ENCODE measurements at regions of chr4 and their contacts with region 1.

Region 1: GRCh38 chr4:2934813-2935761 is 28.1 kb downstream of the NOP14 start:
- DNase-seq: peak; percentile 98
- H3K4me3 ChIP-seq: peak overlapping the region; percentile 71 to 97 (median 88)
- H3K27ac ChIP-seq: peak overlapping the region; percentile 90 to 99 (median 94)
- H3K4me1 ChIP-seq: peaks cover 40 to 78% (median 64%) of the 10 kb centered on the region in 6 donors
- H3K27me3 ChIP-seq: no peaks in the 10 kb centered on the region
- CTCF ChIP-seq: peak in 9 of 11 experiments; percentile 18 to 59 (median 43)
- POLR2A ChIP-seq: peak in 2 of 3 donors; percentile 70 to 80

Region 2: DNA sequence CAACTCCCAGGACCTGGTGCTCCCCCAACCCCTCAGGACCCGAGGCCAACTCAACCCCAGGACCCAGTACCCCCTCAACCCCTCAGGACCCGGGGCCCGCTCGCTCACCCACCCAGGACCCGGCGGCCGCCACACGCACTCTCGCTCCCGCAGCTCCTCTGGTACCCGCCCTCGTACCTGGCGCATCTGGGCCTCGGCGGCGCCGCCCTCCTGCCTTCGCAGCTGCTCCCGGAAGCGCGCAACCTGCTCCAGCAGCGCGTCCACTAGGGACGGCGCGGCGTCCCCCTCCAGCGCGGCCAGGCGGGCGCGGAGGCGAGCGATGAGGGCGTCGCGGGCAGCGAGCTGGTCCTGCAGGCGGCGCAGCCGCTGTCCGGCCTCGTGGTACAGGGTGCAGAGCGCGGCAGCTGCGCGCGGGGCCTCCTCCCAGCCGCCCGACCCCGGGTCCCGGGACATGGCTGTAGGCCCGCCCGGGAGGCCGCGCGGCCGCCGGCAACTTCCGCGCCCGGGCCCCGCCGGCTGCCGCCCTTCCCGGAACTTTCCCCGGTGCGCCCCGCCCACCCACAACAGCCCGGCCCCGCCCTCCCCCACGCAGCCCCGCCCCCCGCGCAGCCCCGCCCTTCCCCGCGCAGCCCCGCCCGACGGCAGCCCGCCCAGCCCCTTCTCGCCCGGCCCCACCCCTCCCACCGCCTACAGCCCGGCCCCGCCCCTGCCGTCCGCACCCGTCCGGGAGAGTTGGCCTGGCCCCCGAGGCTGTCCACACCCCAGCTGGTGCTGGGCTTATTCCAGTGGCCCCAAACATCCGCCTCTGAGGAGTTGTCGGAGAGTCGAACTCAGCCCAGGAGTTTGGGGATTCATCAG is 179.0 kb before region 1 on chr4 and contains the start of gene TNIP2:
- intact Hi-C with region 1: loop called (anchors 10 kb)
- DNase-seq: peak; percentile 96
- H3K4me3 ChIP-seq: peak within 1 kb of the TSS; percentile 73 to 96 (median 86)
- H3K27ac ChIP-seq: peak within 1 kb of the TSS; percentile 91 to 98 (median 94)
- H3K4me1 ChIP-seq: peaks cover 10 to 55% (median 30%) of the 10 kb centered on the region in 6 donors
- H3K27me3 ChIP-seq: no peaks in the 10 kb centered on the region
- CTCF ChIP-seq: peak in 8 of 11 experiments; percentile 32 to 62 (median 42)
- POLR2A ChIP-seq: peak in 2 of 3 donors; percentile 65 to 77
- total RNA-seq, gene TNIP2: 35.1 to 52.5 (median 50.4) TPM

Region 3: DNA sequence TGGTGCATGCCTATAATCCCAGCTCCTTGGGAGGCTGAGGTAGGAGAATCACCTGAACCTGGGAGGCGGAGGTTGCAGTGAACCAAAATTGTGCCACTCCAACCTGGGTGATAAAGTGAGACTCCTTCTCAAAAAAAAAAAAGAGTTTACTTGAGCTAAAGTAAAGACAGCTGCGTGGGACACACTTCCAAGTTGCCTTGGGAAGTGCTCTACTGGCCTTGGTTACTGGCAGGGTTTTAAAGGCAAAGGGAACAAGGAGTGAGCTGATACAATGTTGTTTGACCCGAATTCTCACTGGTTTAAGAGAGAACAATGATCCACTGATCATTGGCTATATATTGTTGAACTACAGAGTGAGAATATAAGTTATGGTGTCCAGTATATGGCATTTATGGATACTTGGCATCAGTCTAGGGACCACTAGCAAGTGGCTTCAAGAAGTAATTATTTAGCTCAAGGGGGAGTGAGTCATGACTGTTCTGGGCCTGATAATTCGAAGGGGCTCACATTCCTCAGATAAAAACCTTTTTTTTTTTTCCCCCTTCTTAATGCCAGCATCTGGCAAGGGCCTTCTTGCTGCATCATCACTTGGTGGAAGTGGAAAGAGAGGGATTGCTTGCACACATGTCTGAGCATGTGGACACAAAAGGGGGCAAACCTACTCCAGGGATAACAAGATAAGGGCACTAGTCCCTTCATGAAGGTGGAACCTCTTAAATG is 60.6 kb after region 1 on chr4:
- intact Hi-C with region 1: no loop called
- DNase-seq: no peak
- H3K4me3 ChIP-seq: no peak overlapping the region
- H3K27ac ChIP-seq: no peak overlapping the region
- H3K4me1 ChIP-seq: no peaks in the 10 kb centered on the region
- H3K27me3 ChIP-seq: no peaks in the 10 kb centered on the region
- CTCF ChIP-seq: no peak
- POLR2A ChIP-seq: no peak